HepG2 (cell line): ENCODE measurements at regions of chr1 and their contacts with region 1.

Region 1: DNA sequence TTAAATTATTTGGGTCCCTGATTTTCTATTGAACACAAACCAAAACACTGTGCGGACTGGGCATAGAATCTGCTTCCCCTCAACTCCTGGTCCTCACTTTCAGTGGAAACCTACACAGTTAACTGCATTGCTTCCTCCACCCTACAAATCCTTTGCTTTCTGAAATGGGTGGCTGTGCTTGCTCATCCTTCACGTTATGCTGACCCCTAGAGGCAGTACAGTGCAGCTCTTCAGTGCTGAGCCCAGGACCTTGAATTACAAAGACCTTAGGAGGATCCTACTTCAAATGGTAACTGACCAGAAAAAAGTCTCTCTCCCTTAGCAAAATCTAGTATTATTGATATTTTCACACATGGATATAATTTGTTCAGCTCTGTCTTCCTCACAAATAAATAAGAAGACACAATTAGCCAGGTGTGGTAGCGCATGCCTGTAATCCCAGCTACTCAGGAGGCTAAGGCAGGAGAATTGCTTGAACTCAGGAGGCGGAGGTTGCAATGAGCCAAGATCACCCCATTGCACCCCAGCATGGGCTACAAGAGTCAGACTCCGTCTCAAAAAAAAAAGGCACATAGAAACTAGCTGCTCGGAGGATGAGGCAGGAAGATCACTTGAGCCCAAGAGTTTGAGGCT is 63.4 kb upstream of the L1TD1 start:
- DNase-seq: peak; percentile 50
- ATAC-seq: peak; percentile 96
- H3K4me3 ChIP-seq: no peak overlapping the region
- H3K27ac ChIP-seq: no peak overlapping the region
- H3K4me1 ChIP-seq: no peaks in the 10 kb centered on the region
- H3K27me3 ChIP-seq: no peaks in the 10 kb centered on the region
- CTCF ChIP-seq: peak; percentile 78
- EP300 ChIP-seq: no peak
- POLR2A ChIP-seq: no peak
- RAD21 ChIP-seq: no peak

Region 2: DNA sequence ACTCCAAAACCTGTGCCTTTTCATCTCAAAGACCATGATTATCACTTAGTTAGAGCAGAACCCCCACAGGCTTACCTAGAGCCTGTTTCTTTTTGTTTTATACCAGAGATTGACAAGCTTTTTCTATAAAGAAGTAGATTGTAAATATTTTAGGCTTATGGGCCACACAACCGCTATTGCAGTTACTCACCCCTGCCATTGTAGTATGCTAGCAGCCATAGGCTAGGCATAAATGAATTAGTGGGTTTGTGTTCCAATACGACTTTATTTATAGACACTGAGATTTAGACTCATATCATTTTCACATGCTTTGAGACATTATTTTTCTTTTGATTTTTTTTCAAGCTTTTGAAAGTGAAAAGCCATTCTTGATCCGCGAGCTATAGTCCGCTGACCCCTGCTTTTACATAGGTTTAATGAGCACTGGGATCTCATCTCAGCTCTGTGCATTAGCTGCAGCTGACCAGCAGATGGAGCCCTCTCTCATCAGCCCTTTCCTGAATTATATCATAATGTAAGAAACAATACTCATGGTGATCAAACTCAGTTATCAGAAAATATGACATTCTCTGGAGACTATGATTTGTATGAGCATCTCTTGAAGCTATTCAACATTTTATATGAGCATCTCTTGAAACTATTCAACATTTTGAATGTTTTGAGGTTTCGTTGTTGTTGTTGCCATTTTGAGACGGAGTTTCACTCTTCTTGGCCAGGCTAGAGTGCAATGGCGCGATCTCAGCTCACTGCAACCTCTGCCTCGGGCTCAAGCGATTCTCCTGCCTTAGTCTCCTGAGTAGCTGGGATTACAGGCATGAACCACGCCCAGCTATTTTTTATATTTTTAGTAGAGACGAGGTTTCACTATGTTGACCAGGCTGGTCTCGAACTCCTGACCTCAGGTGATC is 48.5 kb before region 1 on chr1:
- CTCF ChIA-PET with region 1: interaction called, 4 read pairs
- POLR2A ChIA-PET with region 1: no interaction called
- in situ Hi-C with region 1: no loop called
- intact Hi-C with region 1: loop called (anchors 1 kb)
- DNase-seq: peak; percentile 20
- ATAC-seq: peak; percentile 83
- H3K4me3 ChIP-seq: no peak overlapping the region
- H3K27ac ChIP-seq: no peak overlapping the region
- H3K4me1 ChIP-seq: no peaks in the 10 kb centered on the region
- H3K27me3 ChIP-seq: no peaks in the 10 kb centered on the region
- CTCF ChIP-seq: peak; percentile 75
- EP300 ChIP-seq: no peak
- POLR2A ChIP-seq: no peak
- RAD21 ChIP-seq: no peak; the same call in 1 of the 2 replicates